ENCODE measurements at regions of chr17 and their contacts with region 1.

Region 1: GRCh38 chr17:15123593-15124263 is 141.4 kb downstream of the PMP22 start:
- DNase-seq: no peak
- ATAC-seq: no peak
- H3K4me3 ChIP-seq: no peak overlapping the region
- H3K27ac ChIP-seq: no peak overlapping the region
- H3K4me1 ChIP-seq: no peaks in the 10 kb centered on the region
- H3K27me3 ChIP-seq: no peaks in the 10 kb centered on the region

Region 2: GRCh38 chr17:15169676-15170075 is 45.9 kb after region 1 on chr17:
- intact Hi-C with region 1: loop called in 1 of 4 experiments (anchors 5 kb)
- DNase-seq: no peak
- ATAC-seq: no peak
- H3K4me3 ChIP-seq: no peak overlapping the region
- H3K27ac ChIP-seq: no peak overlapping the region
- H3K4me1 ChIP-seq: no peaks in the 10 kb centered on the region
- H3K27me3 ChIP-seq: no peaks in the 10 kb centered on the region